GM12878 (cell line): ENCODE measurements at regions of chr11 and their contacts with region 1.

Region 1: DNA sequence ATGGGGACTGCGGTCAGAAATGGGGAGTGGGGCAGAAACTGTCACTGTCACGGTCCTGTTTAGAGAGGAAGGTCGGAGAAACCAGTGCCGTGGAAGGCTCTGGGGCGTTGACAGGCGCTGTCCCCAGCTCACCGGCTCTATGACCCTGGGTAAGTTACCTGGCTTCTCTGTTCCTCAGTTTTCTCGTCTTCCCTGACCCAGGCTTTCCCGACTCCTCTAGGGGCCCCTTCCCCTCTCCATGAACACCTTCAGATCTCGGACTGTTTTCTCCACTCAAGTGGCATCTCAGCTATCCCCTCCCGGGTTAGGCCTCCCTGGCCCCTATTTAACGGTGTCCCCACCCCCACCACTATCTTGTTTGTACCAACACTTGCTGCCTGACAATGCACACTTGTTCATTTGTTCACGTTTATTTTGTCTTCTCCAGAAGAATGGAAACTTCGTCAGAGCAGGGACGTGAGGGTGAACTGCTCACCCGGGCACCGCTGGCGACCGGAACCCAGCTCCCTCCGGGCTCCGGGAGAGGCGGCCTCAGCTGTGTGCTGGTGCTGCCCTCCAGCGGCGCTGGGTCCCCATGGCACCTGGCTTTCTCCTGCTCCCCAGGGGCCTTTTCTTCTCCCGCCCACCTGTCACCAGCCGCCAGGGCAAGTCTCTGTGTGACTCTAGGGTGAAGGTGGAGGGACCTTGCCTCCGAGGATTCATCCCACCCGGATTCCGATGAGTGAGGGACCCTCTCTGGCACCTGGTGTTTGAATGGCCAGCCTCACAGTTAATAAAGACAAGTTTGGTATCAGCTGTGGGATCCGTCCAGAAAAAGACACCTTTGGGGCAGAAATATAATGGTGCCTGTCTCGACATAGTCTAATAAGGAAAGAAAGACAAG is 33.1 kb upstream of the SLC35C1 start:
- DNase-seq: no peak
- ATAC-seq: peak; percentile 97
- H3K4me3 ChIP-seq: peak overlapping the region; percentile 45; the same call in 1 of the 2 replicates
- H3K27ac ChIP-seq: no peak overlapping the region
- H3K4me1 ChIP-seq: peaks cover 16% of the 10 kb centered on the region
- H3K27me3 ChIP-seq: peaks cover 0 to 7% of the 10 kb centered on the region in 2 experiments; a peak in 2 of 4 replicates
- CTCF ChIP-seq: peak; percentile 91 to 97 (median 97); a peak in 5 of 6 replicates
- EP300 ChIP-seq: no peak
- POLR2A ChIP-seq: no peak
- RAD21 ChIP-seq: peak; percentile 73

Region 2: GRCh38 chr11:45339729-45340519 is 431.9 kb before region 1 on chr11:
- CTCF ChIA-PET with region 1: interaction called, 14 read pairs
- POLR2A ChIA-PET with region 1: no interaction called
- RAD21 ChIA-PET with region 1: interaction called, 6 read pairs
- SMC1A ChIA-PET with region 1: interaction called, 3 read pairs
- in situ Hi-C with region 1: no loop called
- intact Hi-C with region 1: loop called (anchors 1 kb)
- DNase-seq: peak; percentile 58
- ATAC-seq: peak; percentile 99
- H3K4me3 ChIP-seq: peak overlapping the region; percentile 50; the same call in 1 of the 2 replicates
- H3K27ac ChIP-seq: no peak overlapping the region; the same call in 1 of the 2 replicates
- H3K4me1 ChIP-seq: peaks cover 10% of the 10 kb centered on the region; the same call in 1 of the 2 replicates
- H3K27me3 ChIP-seq: peaks cover 0 to 4% of the 10 kb centered on the region in 2 experiments; a peak in 1 of 4 replicates
- CTCF ChIP-seq: peak; percentile 92 to 97 (median 93); a peak in 5 of 6 replicates
- EP300 ChIP-seq: no peak
- POLR2A ChIP-seq: no peak
- RAD21 ChIP-seq: peak; percentile 53

Region 3: GRCh38 chr11:45436118-45436517 is 335.7 kb before region 1 on chr11:
- CTCF ChIA-PET with region 1: no interaction called
- POLR2A ChIA-PET with region 1: no interaction called
- RAD21 ChIA-PET with region 1: no interaction called
- SMC1A ChIA-PET with region 1: no interaction called
- in situ Hi-C with region 1: no loop called
- intact Hi-C with region 1: no loop called
- DNase-seq: no peak
- ATAC-seq: no peak
- H3K4me3 ChIP-seq: no peak overlapping the region
- H3K27ac ChIP-seq: no peak overlapping the region
- H3K4me1 ChIP-seq: no peaks in the 10 kb centered on the region
- H3K27me3 ChIP-seq: peaks cover 0 to 4% of the 10 kb centered on the region in 2 experiments; a peak in 2 of 4 replicates
- CTCF ChIP-seq: no peak
- EP300 ChIP-seq: no peak
- POLR2A ChIP-seq: no peak
- RAD21 ChIP-seq: no peak

Region 4: GRCh38 chr11:45635907-45636306 is 135.9 kb before region 1 on chr11:
- CTCF ChIA-PET with region 1: no interaction called
- POLR2A ChIA-PET with region 1: no interaction called
- RAD21 ChIA-PET with region 1: no interaction called
- SMC1A ChIA-PET with region 1: no interaction called
- in situ Hi-C with region 1: no loop called
- intact Hi-C with region 1: no loop called
- DNase-seq: no peak
- ATAC-seq: no peak
- H3K4me3 ChIP-seq: no peak overlapping the region
- H3K27ac ChIP-seq: no peak overlapping the region
- H3K4me1 ChIP-seq: no peaks in the 10 kb centered on the region
- H3K27me3 ChIP-seq: no peaks in the 10 kb centered on the region; a peak in 1 of 4 replicates
- CTCF ChIP-seq: no peak
- EP300 ChIP-seq: no peak
- POLR2A ChIP-seq: no peak
- RAD21 ChIP-seq: no peak

Region 5: DNA sequence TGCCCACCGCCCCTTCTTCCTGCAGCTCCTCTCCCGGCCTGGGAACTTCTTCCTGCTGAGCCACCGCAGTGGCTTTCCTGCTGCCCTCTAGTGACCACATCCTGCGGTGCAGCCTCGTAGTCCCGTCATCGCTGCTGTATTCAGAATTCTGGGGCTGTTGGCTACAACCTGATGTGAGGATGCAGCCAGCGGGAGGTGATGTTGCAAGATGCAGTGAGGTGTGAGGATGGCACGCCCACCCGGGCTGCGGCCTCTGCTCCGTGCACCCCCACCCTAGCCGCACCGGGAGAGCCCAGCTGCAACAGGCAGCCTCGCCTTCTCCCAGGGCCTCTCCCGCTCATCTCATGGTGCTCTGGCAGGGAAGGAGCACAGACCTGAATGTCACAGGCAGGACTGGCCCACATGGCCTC is 116.5 kb before region 1 on chr11:
- CTCF ChIA-PET with region 1: interaction called, 20 read pairs
- POLR2A ChIA-PET with region 1: no interaction called
- RAD21 ChIA-PET with region 1: interaction called, 6 read pairs
- SMC1A ChIA-PET with region 1: interaction called, 5 read pairs
- in situ Hi-C with region 1: no loop called
- intact Hi-C with region 1: loop called (anchors 5 kb)
- DNase-seq: no peak
- ATAC-seq: peak; percentile 85
- H3K4me3 ChIP-seq: no peak overlapping the region
- H3K27ac ChIP-seq: no peak overlapping the region
- H3K4me1 ChIP-seq: no peaks in the 10 kb centered on the region; the same call in 1 of the 2 replicates
- H3K27me3 ChIP-seq: peaks cover 3 to 10% of the 10 kb centered on the region in 2 experiments; a peak in 1 of 4 replicates
- CTCF ChIP-seq: peak; percentile 80 to 95 (median 92)
- EP300 ChIP-seq: no peak
- POLR2A ChIP-seq: no peak
- RAD21 ChIP-seq: peak; percentile 65

Region 6: GRCh38 chr11:45761659-45762058 is 10.1 kb before region 1 on chr11:
- CTCF ChIA-PET with region 1: interaction called, 12 read pairs
- POLR2A ChIA-PET with region 1: no interaction called
- RAD21 ChIA-PET with region 1: no interaction called
- SMC1A ChIA-PET with region 1: interaction called, 3 read pairs
- in situ Hi-C with region 1: no loop called
- intact Hi-C with region 1: no loop called
- DNase-seq: no peak
- ATAC-seq: peak; percentile 67
- H3K4me3 ChIP-seq: no peak overlapping the region
- H3K27ac ChIP-seq: no peak overlapping the region
- H3K4me1 ChIP-seq: no peaks in the 10 kb centered on the region
- H3K27me3 ChIP-seq: peaks cover 0 to 2% of the 10 kb centered on the region in 2 experiments; a peak in 1 of 4 replicates
- CTCF ChIP-seq: no peak
- EP300 ChIP-seq: no peak
- POLR2A ChIP-seq: no peak
- RAD21 ChIP-seq: no peak

Region 7: DNA sequence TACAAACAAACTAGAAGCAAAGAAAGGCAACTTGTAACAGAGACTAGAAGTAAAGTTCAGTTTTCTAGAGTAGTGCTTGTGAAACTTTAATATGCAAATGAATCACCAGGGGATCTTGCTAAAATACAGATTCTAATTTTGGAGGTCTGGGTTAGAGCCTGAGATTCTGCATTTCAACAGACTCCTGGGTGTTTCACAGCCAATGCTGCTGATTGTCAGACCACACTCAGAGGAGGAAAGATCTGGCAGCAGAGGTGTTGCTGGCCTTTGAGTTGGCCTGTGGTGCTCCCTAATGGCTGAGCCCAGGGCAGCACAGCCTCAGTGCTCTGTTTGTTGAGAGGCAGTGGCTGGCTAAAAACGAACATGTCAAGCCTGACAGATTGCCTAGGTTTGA is 80.9 kb after region 1 on chr11:
- CTCF ChIA-PET with region 1: interaction called, 25 read pairs
- POLR2A ChIA-PET with region 1: no interaction called
- RAD21 ChIA-PET with region 1: interaction called, 8 read pairs
- SMC1A ChIA-PET with region 1: interaction called, 11 read pairs
- in situ Hi-C with region 1: no loop called
- intact Hi-C with region 1: no loop called
- DNase-seq: no peak
- ATAC-seq: peak; percentile 71
- H3K4me3 ChIP-seq: peak overlapping the region; percentile 61; the same call in 1 of the 2 replicates
- H3K27ac ChIP-seq: peak overlapping the region; percentile 32; the same call in 1 of the 2 replicates
- H3K4me1 ChIP-seq: peaks cover 16% of the 10 kb centered on the region
- H3K27me3 ChIP-seq: no peaks in the 10 kb centered on the region
- CTCF ChIP-seq: peak; percentile 32 to 67 (median 39); a peak in 4 of 6 replicates
- EP300 ChIP-seq: no peak
- POLR2A ChIP-seq: no peak
- RAD21 ChIP-seq: peak; percentile 46

Region 8: GRCh38 chr11:46006418-46007070 is 234.7 kb after region 1 on chr11:
- CTCF ChIA-PET with region 1: interaction called, 21 read pairs
- POLR2A ChIA-PET with region 1: no interaction called
- RAD21 ChIA-PET with region 1: interaction called, 14 read pairs
- SMC1A ChIA-PET with region 1: interaction called, 7 read pairs
- in situ Hi-C with region 1: no loop called
- intact Hi-C with region 1: no loop called
- DNase-seq: peak; percentile 37
- ATAC-seq: peak; percentile 96
- H3K4me3 ChIP-seq: no peak overlapping the region
- H3K27ac ChIP-seq: no peak overlapping the region
- H3K4me1 ChIP-seq: no peaks in the 10 kb centered on the region
- H3K27me3 ChIP-seq: no peaks in the 10 kb centered on the region
- CTCF ChIP-seq: peak; percentile 71 to 80 (median 72)
- EP300 ChIP-seq: no peak
- POLR2A ChIP-seq: no peak
- RAD21 ChIP-seq: peak; percentile 81

Region 9: GRCh38 chr11:46075168-46075567 is 303.4 kb after region 1 on chr11:
- CTCF ChIA-PET with region 1: no interaction called
- POLR2A ChIA-PET with region 1: no interaction called
- RAD21 ChIA-PET with region 1: no interaction called
- SMC1A ChIA-PET with region 1: no interaction called
- in situ Hi-C with region 1: no loop called
- intact Hi-C with region 1: no loop called
- DNase-seq: no peak
- ATAC-seq: no peak
- H3K4me3 ChIP-seq: no peak overlapping the region
- H3K27ac ChIP-seq: no peak overlapping the region
- H3K4me1 ChIP-seq: no peaks in the 10 kb centered on the region
- H3K27me3 ChIP-seq: no peaks in the 10 kb centered on the region
- CTCF ChIP-seq: no peak
- EP300 ChIP-seq: no peak
- POLR2A ChIP-seq: no peak
- RAD21 ChIP-seq: no peak